ENCODE measurements at regions of chr2 and their contacts with region 1.

Region 1: DNA sequence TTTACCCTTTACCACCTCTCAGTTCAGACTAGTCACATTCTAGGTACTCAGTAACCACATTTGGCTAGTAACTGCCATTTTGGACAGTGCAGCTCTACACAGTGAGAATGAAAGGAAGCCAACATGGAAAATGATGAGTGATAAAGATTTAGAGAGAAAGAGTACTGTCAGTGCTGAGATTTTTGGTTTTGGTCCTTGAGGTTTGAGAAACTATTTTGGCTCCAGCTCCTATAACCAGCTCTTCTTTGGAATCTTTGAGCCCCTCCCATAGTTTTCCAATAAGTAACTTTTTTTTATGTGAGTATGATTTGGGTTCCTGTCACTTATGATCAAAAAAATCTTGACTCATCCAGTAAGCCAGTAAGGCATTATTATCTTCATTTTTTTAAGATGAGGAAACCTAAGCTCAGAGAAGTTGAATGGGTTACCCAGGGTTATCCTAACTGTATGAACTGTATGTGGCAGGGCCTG is 173.0 kb downstream of the BABAM2 start:
- DNase-seq: no peak
- ATAC-seq: peak; percentile 98
- H3K4me3 Mint-ChIP-seq: no peak overlapping the region
- H3K27ac Mint-ChIP-seq: no peak overlapping the region
- H3K4me1 Mint-ChIP-seq: peaks cover 14% of the 10 kb centered on the region
- H3K27me3 Mint-ChIP-seq: no peaks in the 10 kb centered on the region

Region 2: DNA sequence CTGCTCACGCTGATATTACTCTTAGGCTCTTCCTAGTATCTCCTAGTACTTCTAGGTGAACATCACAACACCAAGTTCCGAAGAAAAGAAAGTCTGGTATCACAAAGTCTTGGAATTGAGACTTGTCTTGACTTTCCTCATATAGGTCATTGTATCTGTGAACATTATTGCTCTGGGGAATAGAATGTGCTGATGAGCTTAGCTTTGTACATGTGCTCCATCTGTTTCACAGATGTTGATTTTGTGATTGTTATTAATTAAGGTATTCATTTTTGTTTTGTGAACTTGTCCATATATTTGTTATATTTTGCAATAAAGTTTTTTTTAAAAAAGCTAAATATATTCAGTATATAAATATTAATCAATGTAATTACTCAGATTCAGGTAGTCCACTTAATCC is 61.3 kb before region 1 on chr2:
- CTCF ChIA-PET with region 1: no interaction called
- POLR2A ChIA-PET with region 1: interaction called, 11 read pairs
- intact Hi-C with region 1: no loop called
- DNase-seq: no peak
- ATAC-seq: no peak
- H3K4me3 Mint-ChIP-seq: no peak overlapping the region
- H3K27ac Mint-ChIP-seq: no peak overlapping the region
- H3K4me1 Mint-ChIP-seq: peaks cover 22% of the 10 kb centered on the region
- H3K27me3 Mint-ChIP-seq: no peaks in the 10 kb centered on the region

Region 3: GRCh38 chr2:28088970-28089369 is 25.4 kb after region 1 on chr2:
- CTCF ChIA-PET with region 1: no interaction called
- POLR2A ChIA-PET with region 1: no interaction called
- intact Hi-C with region 1: no loop called
- DNase-seq: no peak
- ATAC-seq: no peak
- H3K4me3 Mint-ChIP-seq: no peak overlapping the region
- H3K27ac Mint-ChIP-seq: no peak overlapping the region
- H3K4me1 Mint-ChIP-seq: no peaks in the 10 kb centered on the region
- H3K27me3 Mint-ChIP-seq: no peaks in the 10 kb centered on the region

Measured in activated CD4-positive, alpha-beta T cell treated with anti-CD3 and anti-CD28 coated beads for 36 hours (primary cell).